Activated B cell treated with CpG ODN at 0.5 μM for 24 hours (primary cell): ENCODE measurements at regions of chr7 and their contacts with region 1.

Region 1: DNA sequence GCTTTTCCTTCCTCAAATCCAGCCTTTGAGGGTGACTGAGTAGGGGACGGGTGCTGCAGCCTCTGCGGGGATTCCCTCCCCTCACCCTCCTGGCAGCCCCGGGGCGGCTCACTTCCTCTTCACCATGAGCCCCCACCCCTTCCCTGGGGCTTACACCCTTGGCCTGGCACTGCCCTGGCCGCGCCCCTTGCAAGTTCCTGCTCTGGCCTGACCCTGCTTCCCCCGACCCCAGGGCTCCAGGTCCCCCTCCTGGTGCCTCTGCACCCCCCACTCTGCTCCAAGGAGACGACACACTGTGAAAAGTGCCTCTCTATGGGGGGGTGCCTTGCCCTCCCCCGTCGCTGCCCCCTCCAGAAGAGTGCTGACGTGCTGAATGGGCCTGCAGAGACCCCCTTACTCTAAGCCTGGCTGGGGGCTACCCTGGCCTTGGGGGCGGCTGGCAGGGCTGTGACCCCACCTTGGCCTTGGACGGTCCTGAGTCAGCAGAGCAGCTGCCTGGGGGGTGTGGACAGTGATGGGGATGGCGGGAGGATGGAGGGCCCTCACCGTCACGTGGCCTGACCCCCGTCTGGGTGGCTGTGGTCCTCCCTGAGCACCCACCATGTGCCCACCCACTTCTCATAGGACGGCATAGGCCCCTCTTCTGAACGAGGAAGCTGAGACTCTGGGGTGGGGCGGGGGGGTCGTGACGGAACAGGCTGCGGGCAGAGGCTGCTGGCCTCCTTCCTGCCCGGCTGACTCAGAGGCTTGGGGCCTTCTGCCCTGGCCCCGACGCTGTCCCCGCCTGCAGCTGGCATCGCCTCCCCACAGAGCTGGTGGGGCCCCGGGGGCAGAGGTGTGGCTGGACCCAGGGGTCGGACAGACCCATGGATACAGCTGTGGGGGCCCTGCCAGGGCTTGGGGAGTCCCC is 9.8 kb downstream of the LFNG start:
- DNase-seq: peak; percentile 79
- ATAC-seq: peak; percentile 68
- H3K4me3 Mint-ChIP-seq: peak overlapping the region; percentile 79
- H3K27ac Mint-ChIP-seq: peak overlapping the region; percentile 97
- H3K4me1 Mint-ChIP-seq: peaks cover 66% of the 10 kb centered on the region
- H3K27me3 Mint-ChIP-seq: no peaks in the 10 kb centered on the region
- CTCF ChIP-seq: no peak

Region 2: DNA sequence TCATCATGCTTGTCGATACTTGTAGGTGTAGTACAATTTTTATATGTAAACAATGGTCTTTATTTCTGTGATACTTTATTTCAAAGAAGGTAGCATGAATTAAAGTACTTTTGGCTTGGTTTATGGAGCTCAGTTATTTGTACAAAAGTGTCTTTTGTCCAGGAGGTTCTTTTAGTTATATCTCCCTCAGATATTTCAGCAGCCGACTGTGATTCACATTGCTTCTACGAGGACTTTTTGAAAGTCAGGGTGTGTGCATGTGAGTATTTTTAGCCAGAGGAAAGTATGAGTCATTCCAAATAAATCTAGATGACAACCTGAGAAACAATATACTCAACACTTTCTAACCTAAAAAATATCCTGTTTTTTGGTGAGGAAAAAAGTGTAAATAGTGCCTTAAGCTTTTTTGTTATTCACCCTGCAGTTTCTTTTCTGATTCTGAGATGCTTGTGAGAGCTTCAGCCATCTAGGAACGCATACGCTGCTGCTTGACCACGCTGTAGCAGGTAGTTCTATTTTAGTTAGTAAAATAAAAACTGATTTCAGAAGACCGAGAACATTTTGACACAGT is 1697.7 kb before region 1 on chr7:
- CTCF ChIA-PET with region 1: no interaction called
- POLR2A ChIA-PET with region 1: no interaction called
- intact Hi-C with region 1: no loop called
- DNase-seq: no peak
- ATAC-seq: peak; percentile 67
- H3K4me3 Mint-ChIP-seq: peak overlapping the region; percentile 74
- H3K27ac Mint-ChIP-seq: peak overlapping the region; percentile 94
- H3K4me1 Mint-ChIP-seq: peaks cover 47% of the 10 kb centered on the region
- H3K27me3 Mint-ChIP-seq: no peaks in the 10 kb centered on the region
- CTCF ChIP-seq: no peak

Region 3: GRCh38 chr7:1225441-1226185 is 1303.8 kb before region 1 on chr7:
- CTCF ChIA-PET with region 1: no interaction called
- POLR2A ChIA-PET with region 1: no interaction called
- intact Hi-C with region 1: loop called (anchors 10 kb)
- DNase-seq: no peak
- ATAC-seq: no peak
- H3K4me3 Mint-ChIP-seq: no peak overlapping the region
- H3K27ac Mint-ChIP-seq: peak overlapping the region; percentile 9
- H3K4me1 Mint-ChIP-seq: no peaks in the 10 kb centered on the region
- H3K27me3 Mint-ChIP-seq: peaks cover 51% of the 10 kb centered on the region
- CTCF ChIP-seq: no peak

Region 4: GRCh38 chr7:2299131-2299829 is 230.1 kb before region 1 on chr7:
- CTCF ChIA-PET with region 1: no interaction called
- POLR2A ChIA-PET with region 1: interaction called, 11 read pairs
- intact Hi-C with region 1: loop called (anchors 5 kb)
- DNase-seq: peak; percentile 49
- ATAC-seq: peak; percentile 72
- H3K4me3 Mint-ChIP-seq: peak overlapping the region; percentile 77
- H3K27ac Mint-ChIP-seq: peak overlapping the region; percentile 96
- H3K4me1 Mint-ChIP-seq: peaks cover 76% of the 10 kb centered on the region
- H3K27me3 Mint-ChIP-seq: no peaks in the 10 kb centered on the region
- CTCF ChIP-seq: no peak

Region 5: DNA sequence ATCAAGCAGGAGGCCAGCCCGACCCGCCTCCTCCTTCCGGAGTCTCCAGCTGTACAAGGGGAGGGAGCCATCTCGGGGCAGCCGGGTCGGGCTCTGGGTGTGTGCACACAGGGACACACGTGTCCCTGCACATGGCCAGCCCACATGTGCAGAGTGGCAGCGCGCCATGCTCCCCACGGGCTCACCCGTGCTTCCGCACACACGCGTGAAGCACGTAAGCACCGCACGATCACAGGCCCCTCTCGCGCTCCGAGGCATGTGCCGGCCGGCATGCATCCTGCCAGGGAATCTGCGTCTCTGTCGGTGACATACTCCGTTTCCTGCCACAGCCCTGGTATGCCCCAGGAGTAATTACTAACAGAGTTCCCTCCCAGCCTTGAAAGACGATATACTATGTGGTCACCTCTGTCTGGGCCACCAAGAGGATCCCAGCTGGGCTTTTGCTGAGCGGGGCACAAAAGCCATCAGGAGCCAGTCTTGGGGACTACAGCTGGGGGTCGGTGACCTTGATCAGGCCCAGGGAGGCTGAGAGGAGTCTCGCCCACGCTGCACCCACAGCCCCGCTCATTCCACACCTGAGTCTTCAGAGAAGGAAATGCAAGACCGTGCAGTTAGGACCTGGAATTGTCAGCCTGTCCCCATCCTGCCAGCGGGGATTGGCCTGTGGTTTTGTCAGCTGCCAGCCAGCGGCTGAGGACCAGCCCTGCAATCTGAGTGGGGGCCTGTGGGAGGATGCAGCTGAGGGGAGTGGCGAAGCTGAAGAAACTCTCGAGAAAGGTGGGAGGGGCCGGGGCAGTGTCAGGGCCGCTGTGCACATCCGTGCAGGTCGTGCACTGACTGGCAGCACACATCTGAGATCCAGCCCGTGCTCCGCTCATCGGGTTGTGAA is 20.8 kb before region 1 on chr7:
- CTCF ChIA-PET with region 1: interaction called, 10 read pairs
- POLR2A ChIA-PET with region 1: interaction called, 304 read pairs
- intact Hi-C with region 1: loop called (anchors 1 kb)
- DNase-seq: peak; percentile 62
- ATAC-seq: peak; percentile 51
- H3K4me3 Mint-ChIP-seq: peak overlapping the region; percentile 65
- H3K27ac Mint-ChIP-seq: peak overlapping the region; percentile 95
- H3K4me1 Mint-ChIP-seq: peaks cover 68% of the 10 kb centered on the region
- H3K27me3 Mint-ChIP-seq: no peaks in the 10 kb centered on the region
- CTCF ChIP-seq: no peak

Region 6: DNA sequence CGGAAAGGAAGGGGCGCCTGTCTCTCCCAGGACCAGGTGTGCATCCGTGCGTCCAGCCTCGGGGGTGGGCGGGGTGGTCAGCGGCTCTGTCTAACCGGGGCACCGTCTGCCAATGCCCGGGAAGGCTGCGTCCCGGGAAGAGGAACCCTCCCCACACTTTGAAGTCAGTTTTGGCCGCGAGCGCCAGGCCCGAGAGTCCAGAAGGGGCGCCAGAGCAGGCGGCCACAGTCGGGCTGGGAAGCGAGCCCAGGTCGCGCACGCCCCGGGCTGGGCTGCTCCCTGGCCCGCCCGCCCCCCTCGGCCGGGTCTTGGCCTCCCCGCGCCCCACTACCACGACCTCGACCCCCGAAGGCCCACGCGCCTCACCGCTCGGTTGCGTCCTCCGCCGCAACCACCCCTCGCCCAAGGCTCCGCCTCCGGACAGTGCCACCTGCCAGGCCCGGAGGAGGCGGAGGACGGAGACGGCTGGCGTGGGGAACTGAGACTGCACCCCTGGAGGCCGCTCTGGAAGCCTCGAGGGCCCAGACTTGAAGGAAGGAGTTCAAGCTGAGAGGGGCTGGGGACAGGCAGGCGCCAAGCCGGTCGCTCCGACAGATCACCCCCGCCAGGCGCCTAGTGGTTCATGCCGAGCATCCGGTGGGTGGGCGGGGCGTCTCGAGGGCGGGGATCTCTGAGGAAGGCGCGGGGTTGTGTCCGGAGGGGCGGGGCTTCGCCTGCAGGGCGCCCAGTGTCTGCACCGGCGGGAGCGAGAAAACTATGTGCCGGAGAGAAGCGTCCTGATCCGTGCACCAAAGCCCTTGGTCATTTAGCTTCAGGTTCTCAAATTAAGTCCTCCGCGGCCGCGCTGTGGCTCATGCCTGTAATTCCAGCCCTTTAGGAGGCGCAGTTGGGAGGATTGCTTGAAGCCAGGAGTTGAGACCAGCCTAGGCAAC is 26.0 kb after region 1 on chr7 and contains the start of gene BRAT1:
- CTCF ChIA-PET with region 1: no interaction called
- POLR2A ChIA-PET with region 1: interaction called, 26 read pairs
- intact Hi-C with region 1: loop called (anchors 1 kb)
- DNase-seq: peak; percentile 89
- ATAC-seq: peak; percentile 86
- H3K4me3 Mint-ChIP-seq: peak within 1 kb of the TSS; percentile 87
- H3K27ac Mint-ChIP-seq: peak within 1 kb of the TSS; percentile 92
- H3K4me1 Mint-ChIP-seq: peaks cover 45% of the 10 kb centered on the region
- H3K27me3 Mint-ChIP-seq: no peaks in the 10 kb centered on the region
- CTCF ChIP-seq: no peak
- total RNA-seq, gene BRAT1: 29.6 and 31.7 TPM in 2 replicates

Region 7: GRCh38 chr7:2698581-2699288 is 169.3 kb after region 1 on chr7:
- CTCF ChIA-PET with region 1: no interaction called
- POLR2A ChIA-PET with region 1: interaction called, 13 read pairs
- intact Hi-C with region 1: loop called (anchors 5 kb)
- DNase-seq: peak; percentile 50
- ATAC-seq: peak; percentile 94
- H3K4me3 Mint-ChIP-seq: peak overlapping the region; percentile 69
- H3K27ac Mint-ChIP-seq: peak overlapping the region; percentile 75
- H3K4me1 Mint-ChIP-seq: peaks cover 21% of the 10 kb centered on the region
- H3K27me3 Mint-ChIP-seq: peaks cover 2% of the 10 kb centered on the region
- CTCF ChIP-seq: no peak